ENCODE measurements at regions of chr19 and their contacts with region 1.

Region 1: DNA sequence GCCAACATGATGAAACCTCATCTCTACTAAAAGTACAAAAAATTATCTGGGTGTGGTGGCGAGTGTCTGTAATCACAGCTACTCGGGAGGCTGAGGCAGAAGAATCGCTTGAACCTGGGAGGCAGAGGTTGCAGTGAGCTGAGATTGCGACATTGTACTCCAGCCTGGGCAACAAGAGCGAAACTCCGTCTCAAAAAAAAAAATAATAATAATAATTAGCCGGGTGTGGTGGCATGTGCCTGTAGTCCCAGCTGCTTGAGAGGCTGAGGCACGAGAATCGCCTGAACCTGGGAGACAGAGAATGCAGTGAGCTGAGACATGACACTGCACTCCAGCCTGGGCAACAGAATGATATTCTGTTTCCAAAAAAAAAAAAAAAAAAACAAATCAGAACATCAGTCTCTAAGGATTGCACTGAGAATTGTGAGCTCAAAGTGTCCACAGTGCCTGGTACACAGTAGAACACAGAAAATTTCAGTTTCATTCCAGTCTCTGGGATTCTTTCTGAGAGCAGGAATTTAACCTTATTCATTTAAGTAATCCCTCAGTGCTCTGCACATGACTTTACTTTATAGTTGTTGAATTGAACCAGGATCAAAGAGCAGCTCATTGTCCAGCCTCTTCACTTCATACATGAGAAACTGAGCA is 26.1 kb upstream of the GATAD2A start:
- DNase-seq: no peak
- H3K4me3 ChIP-seq: no peak overlapping the region
- H3K4me3 Mint-ChIP-seq: no peak overlapping the region
- H3K27ac ChIP-seq: no peak overlapping the region
- H3K27ac Mint-ChIP-seq: no peak overlapping the region
- H3K4me1 ChIP-seq: peaks cover 2% of the 10 kb centered on the region
- H3K4me1 Mint-ChIP-seq: peaks cover 0 to 3% (median 0%) of the 10 kb centered on the region in 4 donors
- H3K27me3 ChIP-seq: no peaks in the 10 kb centered on the region
- H3K27me3 Mint-ChIP-seq: no peaks in the 10 kb centered on the region

Region 2: GRCh38 chr19:19366612-19367396 is 12.6 kb before region 1 on chr19:
- CTCF ChIA-PET with region 1: interaction called, 30 read pairs
- POLR2A ChIA-PET with region 1: interaction called, 4 read pairs
- intact Hi-C with region 1: loop called (anchors 2 kb)
- DNase-seq: peak; percentile 63 to 73 (median 70)
- H3K4me3 ChIP-seq: peak overlapping the region in 1 of 2 donors; percentile 11
- H3K4me3 Mint-ChIP-seq: peak overlapping the region in 6 of 8 donors; percentile 31 to 82 (median 64)
- H3K27ac ChIP-seq: no peak overlapping the region
- H3K27ac Mint-ChIP-seq: peak overlapping the region; percentile 74 to 93 (median 89)
- H3K4me1 ChIP-seq: peaks cover 24% of the 10 kb centered on the region
- H3K4me1 Mint-ChIP-seq: peaks cover 12 to 25% (median 18%) of the 10 kb centered on the region in 4 donors
- H3K27me3 ChIP-seq: no peaks in the 10 kb centered on the region
- H3K27me3 Mint-ChIP-seq: no peaks in the 10 kb centered on the region

Measured in CD4-positive, alpha-beta memory T cell (primary cell).